ENCODE measurements at regions of chr17 and their contacts with region 1.

Region 1: DNA sequence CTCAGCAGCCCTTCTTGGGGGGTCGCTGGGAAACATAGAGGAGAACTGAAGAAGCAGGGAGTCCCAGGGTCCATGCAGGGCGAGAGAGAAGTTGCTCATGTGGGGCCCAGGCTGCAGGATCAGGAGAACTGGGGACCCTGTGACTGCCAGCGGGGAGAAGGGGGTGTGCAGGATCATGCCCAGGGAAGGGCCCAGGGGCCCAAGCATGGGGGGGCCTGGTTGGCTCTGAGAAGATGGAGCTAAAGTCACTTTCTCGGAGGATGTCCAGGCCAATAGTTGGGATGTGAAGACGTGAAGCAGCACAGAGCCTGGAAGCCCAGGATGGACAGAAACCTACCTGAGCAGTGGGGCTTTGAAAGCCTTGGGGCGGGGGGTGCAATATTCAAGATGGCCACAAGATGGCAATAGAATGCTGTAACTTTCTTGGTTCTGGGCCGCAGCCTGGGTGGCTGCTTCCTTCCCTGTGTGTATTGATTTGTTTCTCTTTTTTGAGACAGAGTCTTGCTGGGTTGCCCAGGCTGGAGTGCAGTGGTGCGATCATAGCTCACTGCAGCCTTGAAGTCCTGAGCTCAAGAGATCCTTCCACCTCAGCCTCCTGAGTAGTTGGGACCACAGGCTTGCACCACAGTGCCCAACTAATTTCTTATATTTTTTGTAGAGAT is 3.4 kb downstream of the STH start:
- DNase-seq: peak in 9 of 10 donors; percentile 49 to 85 (median 71)
- H3K4me3 ChIP-seq: peak overlapping the region in 1 of 59 donors; percentile 1
- H3K27ac ChIP-seq: peak overlapping the region in 53 of 59 donors; percentile 2 to 90 (median 69)
- H3K27me3 ChIP-seq: no peaks in the 10 kb centered on the region
- CTCF ChIP-seq: peak; percentile 92 to 100 (median 97)

Region 2: GRCh38 chr17:46212634-46213435 is 210.4 kb after region 1 on chr17:
- intact Hi-C with region 1: loop called (anchors 2 to 5 kb)
- DNase-seq: peak in 4 of 10 donors; percentile 56 to 84 (median 66)
- H3K4me3 ChIP-seq: peak overlapping the region in 2 of 59 donors; percentile 5 to 7
- H3K27ac ChIP-seq: peak overlapping the region in 16 of 59 donors; percentile 0 to 57 (median 22)
- H3K27me3 ChIP-seq: no peaks in the 10 kb centered on the region
- CTCF ChIP-seq: peak in 55 of 56 donors; percentile 63 to 99 (median 90)

Measured in dorsolateral prefrontal cortex (tissue), 120 donors.